H1 (cell line): ENCODE measurements at regions of chr1 and their contacts with region 1.

Region 1: DNA sequence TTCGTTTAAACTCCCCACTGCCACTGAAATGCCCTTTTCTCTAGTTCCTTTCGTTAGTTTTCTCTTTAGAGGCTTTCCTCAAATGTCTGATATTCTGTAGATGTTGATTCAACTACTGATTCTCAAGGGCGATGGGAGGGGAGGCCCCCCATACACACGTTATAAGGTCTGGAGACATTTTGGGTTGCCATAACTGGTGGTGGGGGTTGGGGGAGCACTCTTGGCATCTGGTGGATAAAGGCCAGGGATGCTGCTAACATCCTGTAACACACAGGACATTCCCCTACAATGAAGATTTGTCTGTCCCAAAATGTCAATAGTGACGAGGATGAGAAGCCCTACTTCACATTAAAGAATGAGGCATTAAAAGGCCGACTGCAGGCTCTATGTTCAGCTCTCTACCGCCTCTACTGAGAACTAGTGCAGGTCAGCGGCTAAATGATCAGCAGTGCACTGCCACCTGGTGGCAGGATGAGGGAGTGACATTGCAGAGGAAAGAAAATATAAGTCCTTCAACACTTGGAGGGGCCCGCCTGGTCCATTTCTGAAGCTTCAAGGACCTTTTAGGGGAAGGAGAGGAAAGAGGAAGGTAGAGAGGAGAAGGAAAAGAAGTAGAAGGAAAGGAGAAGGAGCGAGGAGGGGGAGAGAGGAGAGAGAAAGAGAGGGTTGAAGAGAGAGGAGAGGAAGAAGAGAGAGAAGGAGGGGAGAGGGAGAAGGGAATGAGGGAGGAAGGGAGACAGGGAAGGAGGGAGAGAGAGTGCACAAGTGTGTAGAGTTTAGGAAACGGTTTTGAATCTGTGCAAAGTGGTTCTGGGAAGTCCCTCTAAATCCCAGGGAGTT is 29.4 kb downstream of the ALG14 start:
- DNase-seq: peak; percentile 69 to 88
- H3K4me3 ChIP-seq: peak overlapping the region in 1 of 4 experiments; percentile 35; a peak in 3 of 8 replicates
- H3K27ac ChIP-seq: no peak overlapping the region
- H3K4me1 ChIP-seq: peaks cover 0 to 3% (median 0%) of the 10 kb centered on the region in 4 experiments; a peak in 1 of 7 replicates
- H3K27me3 ChIP-seq: no peaks in the 10 kb centered on the region
- CTCF ChIP-seq: peak; percentile 92 to 100 (median 99)
- EP300 ChIP-seq: no peak
- POLR2A ChIP-seq: no peak
- RAD21 ChIP-seq: peak; percentile 99 to 100

Region 2: GRCh38 chr1:94846308-94846707 is 197.1 kb before region 1 on chr1:
- CTCF ChIA-PET with region 1: interaction called, 39 read pairs
- POLR2A ChIA-PET with region 1: no interaction called
- DNase-seq: no peak
- H3K4me3 ChIP-seq: no peak overlapping the region
- H3K27ac ChIP-seq: no peak overlapping the region
- H3K4me1 ChIP-seq: no peaks in the 10 kb centered on the region
- H3K27me3 ChIP-seq: no peaks in the 10 kb centered on the region
- CTCF ChIP-seq: no peak
- EP300 ChIP-seq: no peak
- POLR2A ChIP-seq: no peak
- RAD21 ChIP-seq: no peak

Region 3: DNA sequence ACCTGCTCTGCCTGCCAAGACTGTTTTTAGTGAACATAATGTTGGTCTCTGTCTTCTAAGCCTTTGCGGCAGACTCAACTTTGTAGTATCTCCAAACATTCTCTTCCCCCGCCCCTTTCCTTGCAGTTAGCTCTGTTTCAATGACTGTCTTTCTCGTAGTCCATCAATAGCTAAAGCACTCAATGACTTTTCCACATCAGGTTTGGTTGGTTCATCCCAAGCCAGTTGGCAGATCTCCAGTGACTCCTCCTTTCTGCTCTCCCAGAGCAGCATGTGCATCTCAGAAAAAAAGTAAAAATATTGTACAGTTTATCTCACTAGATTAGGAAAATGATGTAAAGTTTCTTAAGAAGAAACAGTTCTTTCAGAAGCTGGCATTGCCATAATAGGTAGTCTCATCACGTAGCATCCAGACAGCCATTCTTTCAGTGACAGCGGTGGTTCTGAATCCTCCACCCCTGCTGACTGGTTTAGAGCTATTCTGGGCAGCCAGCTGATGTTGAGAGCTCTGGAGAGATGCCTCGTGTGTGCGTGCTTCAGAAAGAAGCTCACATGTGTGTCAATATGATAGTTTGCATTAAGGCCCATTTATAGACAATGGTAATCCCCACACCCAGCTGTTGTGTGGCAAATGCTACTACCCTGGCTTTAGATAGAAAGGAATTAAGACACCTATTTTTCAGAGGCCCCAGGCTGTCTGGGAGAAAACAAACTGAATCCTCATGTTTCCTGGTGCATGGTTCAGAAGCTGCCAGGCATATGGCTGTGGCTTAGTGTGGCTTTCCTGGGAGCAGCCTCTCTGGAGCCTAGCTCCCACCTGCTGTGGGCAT is 169.6 kb before region 1 on chr1:
- CTCF ChIA-PET with region 1: interaction called, 11 read pairs
- POLR2A ChIA-PET with region 1: no interaction called
- DNase-seq: no peak
- H3K4me3 ChIP-seq: no peak overlapping the region
- H3K27ac ChIP-seq: no peak overlapping the region
- H3K4me1 ChIP-seq: peaks cover 0 to 6% (median 4%) of the 10 kb centered on the region in 4 experiments; a peak in 2 of 7 replicates
- H3K27me3 ChIP-seq: no peaks in the 10 kb centered on the region
- CTCF ChIP-seq: no peak
- EP300 ChIP-seq: no peak
- POLR2A ChIP-seq: no peak
- RAD21 ChIP-seq: no peak

Region 4: DNA sequence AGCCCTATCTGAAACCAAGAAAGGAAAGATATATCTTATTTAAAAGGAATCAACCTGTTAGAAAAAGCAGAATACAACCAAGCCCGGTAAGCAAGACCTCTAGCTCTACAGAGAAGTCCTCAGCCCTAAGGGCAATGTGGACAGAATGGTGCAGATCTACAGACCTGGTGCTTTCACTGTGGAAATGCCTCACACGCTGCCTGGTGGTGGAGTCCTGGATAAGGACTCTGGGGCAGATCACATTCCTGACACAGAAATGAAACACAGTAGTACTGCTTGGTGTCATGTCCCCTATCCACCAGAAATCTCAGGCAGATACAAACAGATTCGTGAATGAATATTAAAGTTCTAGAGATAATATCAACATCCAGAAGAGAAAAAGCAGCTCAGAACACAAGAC is 123.3 kb before region 1 on chr1:
- CTCF ChIA-PET with region 1: interaction called, 11 read pairs
- POLR2A ChIA-PET with region 1: interaction called, 3 read pairs
- DNase-seq: no peak
- H3K4me3 ChIP-seq: no peak overlapping the region
- H3K27ac ChIP-seq: no peak overlapping the region
- H3K4me1 ChIP-seq: peaks cover 4 to 12% (median 5%) of the 10 kb centered on the region in 4 experiments; a peak in 6 of 7 replicates
- H3K27me3 ChIP-seq: no peaks in the 10 kb centered on the region
- CTCF ChIP-seq: no peak
- EP300 ChIP-seq: no peak
- POLR2A ChIP-seq: no peak
- RAD21 ChIP-seq: no peak

Region 5: DNA sequence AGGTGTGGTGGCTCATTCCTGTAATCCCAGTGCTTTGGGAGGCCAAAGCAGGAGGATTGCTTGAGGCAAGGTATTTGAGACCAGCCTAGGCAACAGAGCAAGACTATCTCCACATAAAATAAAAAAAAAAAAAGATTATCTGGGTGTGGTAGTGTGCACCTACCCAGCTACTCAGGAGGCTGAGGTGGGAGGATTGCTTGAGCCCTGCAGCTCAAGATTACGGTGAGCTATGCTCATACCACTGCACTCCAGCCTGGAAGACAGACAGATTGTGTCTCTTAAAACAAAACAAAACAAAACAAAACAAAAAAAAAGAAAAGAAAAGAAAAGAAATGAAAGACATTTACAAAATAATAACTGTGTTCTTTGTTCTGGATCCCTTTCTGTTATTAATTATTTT is 67.7 kb after region 1 on chr1:
- CTCF ChIA-PET with region 1: no interaction called
- POLR2A ChIA-PET with region 1: no interaction called
- DNase-seq: no peak
- H3K4me3 ChIP-seq: no peak overlapping the region
- H3K27ac ChIP-seq: no peak overlapping the region
- H3K4me1 ChIP-seq: no peaks in the 10 kb centered on the region
- H3K27me3 ChIP-seq: no peaks in the 10 kb centered on the region
- CTCF ChIP-seq: no peak
- EP300 ChIP-seq: no peak
- POLR2A ChIP-seq: no peak
- RAD21 ChIP-seq: no peak

Region 6: DNA sequence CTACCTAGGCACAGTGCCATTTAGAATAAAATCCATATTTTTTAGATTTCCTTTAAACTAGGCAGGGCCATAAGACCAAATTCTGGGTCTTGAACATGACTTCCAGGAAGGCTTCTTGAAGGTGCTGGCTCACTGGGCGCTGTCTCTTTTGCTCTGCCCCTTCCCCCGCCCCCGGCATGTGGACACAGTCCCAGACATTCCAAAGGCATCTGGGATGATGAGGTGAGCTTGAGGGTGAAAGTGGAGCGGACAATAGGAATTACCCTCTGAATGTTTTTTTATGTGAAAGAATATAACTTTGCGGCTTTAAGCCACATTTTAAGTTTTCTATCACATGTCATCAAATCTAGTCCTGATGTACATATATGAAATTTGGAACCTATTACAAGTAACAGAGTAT is 220.1 kb after region 1 on chr1:
- CTCF ChIA-PET with region 1: no interaction called
- POLR2A ChIA-PET with region 1: no interaction called
- DNase-seq: no peak
- H3K4me3 ChIP-seq: no peak overlapping the region
- H3K27ac ChIP-seq: no peak overlapping the region
- H3K4me1 ChIP-seq: no peaks in the 10 kb centered on the region
- H3K27me3 ChIP-seq: no peaks in the 10 kb centered on the region
- CTCF ChIP-seq: no peak
- EP300 ChIP-seq: no peak
- POLR2A ChIP-seq: no peak
- RAD21 ChIP-seq: no peak